HepG2 (cell line): ENCODE measurements at regions of chr19 and their contacts with region 1.

Region 1: DNA sequence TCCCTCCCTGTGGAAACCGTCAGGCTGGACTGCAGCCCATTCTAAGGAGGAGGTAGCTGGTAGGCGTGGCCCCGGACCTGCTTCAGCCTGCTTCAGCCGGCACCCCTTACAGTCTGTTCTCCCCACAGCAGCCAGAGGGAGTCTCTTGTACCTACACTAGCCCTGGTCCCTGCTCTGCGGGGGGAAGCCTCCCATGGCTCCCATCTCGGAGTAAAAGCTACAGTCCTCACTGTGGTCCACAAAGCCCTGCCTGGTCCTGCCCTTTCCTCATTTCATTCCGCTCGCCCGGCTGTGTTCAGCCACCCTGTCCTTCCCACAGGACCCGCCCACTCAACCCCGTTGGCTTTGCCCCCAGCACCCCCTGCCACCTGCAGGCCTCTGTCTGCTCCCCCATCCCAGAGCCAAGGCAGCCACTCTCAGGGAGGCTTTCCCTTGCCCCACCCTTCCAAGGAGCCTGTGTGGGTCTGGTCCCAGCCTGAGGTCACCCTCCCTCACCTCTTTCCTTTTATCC is 1.3 kb downstream of the PGLYRP1 start:
- DNase-seq: no peak
- ATAC-seq: no peak
- H3K4me3 ChIP-seq: no peak overlapping the region
- H3K27ac ChIP-seq: no peak overlapping the region
- H3K4me1 ChIP-seq: peaks cover 5% of the 10 kb centered on the region
- H3K27me3 ChIP-seq: no peaks in the 10 kb centered on the region
- CTCF ChIP-seq: 0 out of 2 replicates have a peak, but pooled peaks have one; percentile 8
- EP300 ChIP-seq: no peak
- POLR2A ChIP-seq: no peak
- RAD21 ChIP-seq: no peak

Region 2: GRCh38 chr19:46192992-46193650 is 171.5 kb after region 1 on chr19:
- CTCF ChIA-PET with region 1: no interaction called
- POLR2A ChIA-PET with region 1: no interaction called
- in situ Hi-C with region 1: loop called (anchors 5 kb)
- intact Hi-C with region 1: no loop called
- DNase-seq: peak; percentile 87
- ATAC-seq: peak; percentile 94
- H3K4me3 ChIP-seq: no peak overlapping the region
- H3K27ac ChIP-seq: no peak overlapping the region
- H3K4me1 ChIP-seq: peaks cover 44% of the 10 kb centered on the region
- H3K27me3 ChIP-seq: peaks cover 0 to 6% of the 10 kb centered on the region in 2 experiments; a peak in 2 of 5 replicates
- CTCF ChIP-seq: no peak
- EP300 ChIP-seq: peak; percentile 68 to 85; a peak in 2 of 4 replicates
- POLR2A ChIP-seq: no peak
- RAD21 ChIP-seq: no peak